Heart left ventricle (tissue), 16 donors: ENCODE measurements at regions of chr15 and their contacts with region 1.

Region 1: DNA sequence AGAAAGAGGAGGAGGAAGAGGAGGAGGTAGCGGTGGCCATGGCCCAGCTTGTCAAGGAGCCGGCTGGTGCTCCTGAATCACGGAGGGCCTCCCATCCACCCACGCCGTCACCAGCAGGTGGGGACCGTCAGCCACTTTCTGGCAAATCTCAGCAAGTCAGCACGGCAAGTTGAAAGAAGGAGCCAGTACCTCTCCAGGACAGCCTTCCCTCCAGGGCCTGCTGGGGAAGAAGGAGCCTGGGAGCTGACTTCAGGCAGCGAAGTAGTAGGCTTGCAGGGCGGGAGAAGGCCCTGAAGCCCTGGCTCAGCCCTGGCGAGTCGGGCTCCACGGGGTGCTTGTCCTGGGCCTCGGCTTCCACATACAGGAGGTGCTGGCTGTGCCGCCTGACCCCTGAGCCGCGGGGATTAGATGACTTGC is 99.2 kb upstream of the TRPM1 start:
- DNase-seq: peak; percentile 74 to 88 (median 83)
- ATAC-seq: peak; percentile 72 to 97 (median 93)
- H3K4me3 ChIP-seq: no peak overlapping the region
- H3K27ac ChIP-seq: no peak overlapping the region
- H3K4me1 ChIP-seq: peaks cover 0 to 8% (median 0%) of the 10 kb centered on the region in 12 donors
- H3K27me3 ChIP-seq: no peaks in the 10 kb centered on the region
- CTCF ChIP-seq: peak; percentile 41 to 90 (median 54)
- POLR2A ChIP-seq: no peak

Region 2: DNA sequence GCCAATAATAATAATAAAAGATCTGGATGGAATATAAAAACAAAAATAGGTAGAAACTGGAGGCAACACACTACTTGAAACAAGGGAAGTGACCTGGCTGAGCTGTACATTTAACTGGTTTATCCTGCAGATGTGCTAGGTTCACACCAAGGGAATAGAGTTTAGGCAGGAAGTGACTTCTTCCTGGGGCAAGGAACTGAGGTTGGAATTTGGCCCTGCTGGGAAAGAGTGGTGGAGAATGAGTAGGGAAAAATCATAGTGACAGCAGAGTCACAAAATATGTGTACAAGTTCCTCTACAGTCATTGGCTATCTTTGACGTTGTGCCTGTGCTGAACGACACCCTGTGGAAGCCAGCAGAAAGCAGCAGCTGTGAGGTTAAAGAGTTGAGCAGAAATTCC is 530.7 kb before region 1 on chr15:
- intact Hi-C with region 1: loop called in 1 of 10 experiments (anchors 10 kb)
- DNase-seq: no peak
- ATAC-seq: no peak
- H3K4me3 ChIP-seq: no peak overlapping the region
- H3K27ac ChIP-seq: no peak overlapping the region
- H3K4me1 ChIP-seq: peaks cover 0 to 5% (median 0%) of the 10 kb centered on the region in 12 donors
- H3K27me3 ChIP-seq: no peaks in the 10 kb centered on the region
- CTCF ChIP-seq: no peak
- POLR2A ChIP-seq: no peak

Region 3: GRCh38 chr15:30979457-30979856 is 221.3 kb before region 1 on chr15:
- intact Hi-C with region 1: loop called in 1 of 10 experiments (anchors 10 kb)
- DNase-seq: no peak
- ATAC-seq: peak in 2 of 4 donors; percentile 53 to 62
- H3K4me3 ChIP-seq: no peak overlapping the region
- H3K27ac ChIP-seq: peak overlapping the region in 1 of 12 donors; percentile 39
- H3K4me1 ChIP-seq: peaks cover 0 to 64% (median 34%) of the 10 kb centered on the region in 12 donors
- H3K27me3 ChIP-seq: no peaks in the 10 kb centered on the region
- CTCF ChIP-seq: no peak
- POLR2A ChIP-seq: no peak

Region 4: GRCh38 chr15:31131538-31132392 is 69.0 kb before region 1 on chr15:
- intact Hi-C with region 1: no loop called
- DNase-seq: no peak
- ATAC-seq: no peak
- H3K4me3 ChIP-seq: no peak overlapping the region
- H3K27ac ChIP-seq: no peak overlapping the region
- H3K4me1 ChIP-seq: peaks cover 0 to 7% (median 4%) of the 10 kb centered on the region in 12 donors
- H3K27me3 ChIP-seq: no peaks in the 10 kb centered on the region
- CTCF ChIP-seq: no peak
- POLR2A ChIP-seq: no peak

Region 5: DNA sequence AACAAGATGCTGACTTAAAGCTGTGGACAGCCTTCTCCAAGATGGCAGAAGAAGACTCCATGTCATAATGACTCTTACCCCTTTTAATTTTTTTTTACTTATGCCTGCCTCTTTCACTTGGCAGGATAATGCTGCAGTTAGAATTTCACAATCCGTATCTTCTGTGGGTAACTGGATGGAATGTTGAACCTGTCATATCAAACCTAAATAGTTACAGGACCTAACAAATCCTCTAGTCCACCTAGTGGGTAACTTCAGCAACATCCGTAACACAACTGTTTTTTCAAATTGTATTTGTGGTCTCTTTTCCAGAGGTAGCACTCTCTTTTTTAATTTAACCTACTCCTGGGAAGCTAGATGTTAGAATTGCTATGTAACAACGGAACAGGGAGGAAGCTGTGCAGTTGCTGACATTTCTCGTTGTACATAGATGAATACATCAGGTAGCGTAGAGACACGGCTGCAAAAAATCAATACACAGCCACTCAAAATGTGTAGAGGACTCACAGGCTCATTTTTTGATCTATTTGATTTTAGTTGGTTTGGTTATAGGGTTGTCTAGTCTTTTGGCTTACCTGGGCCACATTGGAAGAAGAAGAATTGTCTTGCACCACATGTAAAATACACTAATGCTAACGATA is 55.4 kb before region 1 on chr15:
- intact Hi-C with region 1: loop called in 1 of 10 experiments (anchors 10 kb)
- DNase-seq: no peak
- ATAC-seq: no peak
- H3K4me3 ChIP-seq: no peak overlapping the region
- H3K27ac ChIP-seq: no peak overlapping the region
- H3K4me1 ChIP-seq: no peaks in the 10 kb centered on the region
- H3K27me3 ChIP-seq: no peaks in the 10 kb centered on the region
- CTCF ChIP-seq: no peak
- POLR2A ChIP-seq: no peak

Region 6: GRCh38 chr15:31157644-31158091 is 43.1 kb before region 1 on chr15:
- intact Hi-C with region 1: no loop called
- DNase-seq: no peak
- ATAC-seq: no peak
- H3K4me3 ChIP-seq: no peak overlapping the region
- H3K27ac ChIP-seq: no peak overlapping the region
- H3K4me1 ChIP-seq: peaks cover 0 to 9% (median 0%) of the 10 kb centered on the region in 12 donors
- H3K27me3 ChIP-seq: no peaks in the 10 kb centered on the region
- CTCF ChIP-seq: no peak
- POLR2A ChIP-seq: no peak

Region 7: DNA sequence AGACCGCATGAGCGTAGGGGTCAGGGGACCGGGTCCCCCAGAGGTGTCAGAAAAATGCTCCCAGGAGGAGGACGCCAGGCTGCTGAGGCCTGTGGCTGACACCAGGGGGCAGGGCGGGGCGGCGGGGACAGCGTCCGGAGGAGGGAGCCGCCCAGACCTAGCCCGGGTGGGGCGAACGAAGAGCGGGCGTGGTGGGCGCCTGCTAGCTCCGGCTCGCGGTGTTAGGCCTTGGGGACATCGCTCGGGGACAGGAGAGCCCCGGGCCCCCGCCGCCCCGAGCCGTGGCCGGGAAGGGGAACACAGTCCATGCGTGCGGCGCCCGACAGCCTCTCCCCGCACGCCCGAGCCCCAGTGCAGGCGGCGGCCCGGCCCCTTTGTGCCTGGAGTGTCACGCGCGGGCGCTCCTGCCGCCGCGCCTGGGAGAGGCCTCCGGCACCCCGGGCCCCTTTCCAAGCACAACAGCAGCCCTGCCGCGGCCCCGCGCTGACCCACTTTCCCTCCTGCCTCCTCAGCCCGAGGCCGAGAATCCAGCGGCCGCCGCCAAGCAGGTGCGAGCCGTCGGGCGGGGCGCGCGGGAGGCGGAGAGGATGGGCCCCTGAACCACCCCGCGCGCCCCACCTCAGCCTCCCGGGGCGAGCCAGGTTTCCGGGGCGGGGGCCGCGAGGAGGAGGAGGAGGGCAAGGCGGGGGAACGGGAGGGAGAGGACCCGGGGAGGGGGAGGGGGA is 14.9 kb after region 1 on chr15:
- intact Hi-C with region 1: no loop called
- DNase-seq: peak; percentile 81 to 95 (median 88)
- ATAC-seq: peak; percentile 77 to 90 (median 87)
- H3K4me3 ChIP-seq: peak overlapping the region; percentile 44 to 75 (median 65)
- H3K27ac ChIP-seq: peak overlapping the region; percentile 91 to 98 (median 96)
- H3K4me1 ChIP-seq: peaks cover 0 to 67% (median 33%) of the 10 kb centered on the region in 12 donors
- H3K27me3 ChIP-seq: no peaks in the 10 kb centered on the region
- CTCF ChIP-seq: peak; percentile 72 to 98 (median 92)
- POLR2A ChIP-seq: peak in 1 of 2 donors; percentile 36

Region 8: DNA sequence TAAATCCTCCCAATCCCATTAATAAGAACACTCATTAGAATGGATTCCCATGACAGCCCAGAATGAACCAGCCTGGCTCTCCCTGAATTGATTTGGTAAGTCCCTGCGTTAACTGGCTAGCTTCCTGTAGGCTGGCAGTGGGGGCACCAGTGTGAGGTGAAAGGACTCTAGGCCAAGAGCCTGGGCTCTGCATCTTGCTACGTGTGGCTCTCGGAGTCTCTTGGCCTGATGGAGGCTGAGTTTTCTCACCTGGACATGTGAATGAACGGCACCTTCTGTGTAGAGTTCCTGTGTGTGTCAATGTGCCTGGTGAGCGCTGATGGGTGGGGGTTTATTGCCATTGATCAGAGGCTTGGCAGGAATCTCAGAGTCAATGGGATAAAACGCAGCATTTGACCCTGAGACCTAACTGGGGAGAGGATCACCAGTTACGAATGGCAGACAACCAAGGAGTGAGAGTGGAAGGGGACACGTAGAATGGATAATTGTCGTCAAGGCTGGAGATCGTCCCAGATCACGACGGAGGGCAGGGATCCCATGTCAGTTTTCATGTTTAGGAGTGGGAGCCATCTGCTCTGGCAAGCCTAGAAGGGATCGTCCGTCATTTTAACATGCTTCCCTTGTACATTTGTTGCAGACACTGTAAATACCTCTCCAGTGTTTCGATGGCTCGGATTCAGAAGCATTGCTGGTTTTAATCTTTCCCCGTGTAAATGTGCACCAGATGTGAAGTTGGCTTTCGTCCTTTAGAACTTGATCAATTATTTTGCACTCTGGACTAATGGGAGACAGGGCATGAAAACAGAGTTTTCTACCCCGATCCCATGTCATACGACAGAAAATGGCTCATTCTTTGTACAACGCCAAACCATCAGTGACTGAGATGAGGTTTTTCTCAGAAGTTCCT is 116.9 kb after region 1 on chr15:
- intact Hi-C with region 1: loop called in 1 of 10 experiments (anchors 5 kb)
- DNase-seq: no peak
- ATAC-seq: no peak
- H3K4me3 ChIP-seq: no peak overlapping the region
- H3K27ac ChIP-seq: no peak overlapping the region
- H3K4me1 ChIP-seq: peaks cover 0 to 23% (median 0%) of the 10 kb centered on the region in 12 donors
- H3K27me3 ChIP-seq: no peaks in the 10 kb centered on the region
- CTCF ChIP-seq: no peak
- POLR2A ChIP-seq: no peak